ENCODE measurements at regions of chr22 and their contacts with region 1.

Region 1: GRCh38 chr22:30386960-30387827 is at the start of gene RNF215:
- DNase-seq: peak; percentile 87 to 95
- H3K4me3 ChIP-seq: peak within 1 kb of the TSS; percentile 57 to 64 (median 62)
- H3K27ac ChIP-seq: peak within 1 kb of the TSS; percentile 60 to 90 (median 86)
- H3K4me1 ChIP-seq: peaks cover 12 to 21% (median 16%) of the 10 kb centered on the region in 4 donors
- H3K27me3 ChIP-seq: no peaks in the 10 kb centered on the region
- CTCF ChIP-seq: peak in 6 of 7 experiments; percentile 26 to 97 (median 88)
- EP300 ChIP-seq: no peak
- POLR2A ChIP-seq: no peak
- total RNA-seq, gene RNF215: 3.6 to 29.4 (median 15.6) TPM

Region 2: GRCh38 chr22:30289134-30289979 is 97.8 kb before region 1 on chr22 and contains the start of gene CASTOR1:
- intact Hi-C with region 1: loop called (anchors 5 kb)
- DNase-seq: peak; percentile 99
- H3K4me3 ChIP-seq: peak within 1 kb of the TSS; percentile 84 to 97 (median 88)
- H3K27ac ChIP-seq: peak within 1 kb of the TSS; percentile 85 to 97 (median 89)
- H3K4me1 ChIP-seq: peaks cover 36 to 55% (median 48%) of the 10 kb centered on the region in 4 donors
- H3K27me3 ChIP-seq: no peaks in the 10 kb centered on the region
- CTCF ChIP-seq: no peak
- EP300 ChIP-seq: no peak
- POLR2A ChIP-seq: peak in 1 of 4 donors; percentile 17
- total RNA-seq, gene CASTOR1: 1.2 to 57.8 (median 3.7) TPM

Region 3: DNA sequence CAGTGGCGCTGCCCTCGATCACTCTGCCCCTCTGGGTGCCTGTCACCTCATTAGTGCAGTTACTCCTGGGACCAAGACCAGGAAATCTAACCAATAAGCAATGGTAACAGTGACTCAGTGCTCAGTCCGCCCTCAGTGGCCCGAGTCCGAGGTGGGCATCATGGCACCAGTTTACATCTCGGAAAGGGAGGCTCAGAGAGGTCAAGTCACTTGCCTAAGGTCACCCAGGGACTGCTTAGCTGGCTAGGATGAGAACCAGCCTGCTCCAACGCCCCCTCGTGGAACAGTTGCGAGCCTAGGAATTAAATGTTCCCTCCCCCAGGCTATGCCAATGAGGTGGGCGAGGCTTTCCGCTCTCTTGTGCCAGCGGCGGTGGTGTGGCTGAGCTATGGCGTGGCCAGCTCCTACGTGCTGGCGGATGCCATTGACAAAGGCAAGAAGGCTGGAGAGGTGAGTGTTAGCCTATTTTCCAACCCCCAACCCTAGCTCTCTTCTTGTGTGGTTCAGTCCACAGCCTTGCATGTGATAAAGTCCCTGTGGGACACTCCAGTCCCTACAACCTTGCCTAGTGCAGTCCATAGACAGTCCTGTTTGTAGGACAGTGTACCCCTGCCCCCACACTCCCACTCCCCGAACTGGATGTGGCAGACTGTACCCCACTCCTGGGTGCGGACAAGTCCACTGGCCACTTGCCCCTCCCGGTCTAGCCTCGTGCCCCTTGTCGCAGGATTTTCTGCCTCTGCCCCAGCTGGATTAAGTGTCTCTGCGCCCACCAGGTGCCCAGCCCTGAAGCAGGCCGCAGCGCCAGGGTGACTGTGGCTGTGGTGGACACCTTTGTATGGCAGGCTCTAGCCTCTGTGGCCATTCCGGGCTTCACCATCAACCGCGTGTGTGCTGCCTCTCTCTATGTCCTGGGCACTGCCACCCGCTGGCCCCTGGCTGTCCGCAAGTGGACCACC is 39.5 kb after region 1 on chr22:
- intact Hi-C with region 1: loop called (anchors 5 kb)
- DNase-seq: peak; percentile 92 to 94
- H3K4me3 ChIP-seq: peak overlapping the region; percentile 61 to 68 (median 65)
- H3K27ac ChIP-seq: peak overlapping the region; percentile 79 to 98 (median 96)
- H3K4me1 ChIP-seq: peaks cover 27 to 50% (median 49%) of the 10 kb centered on the region in 4 donors
- H3K27me3 ChIP-seq: no peaks in the 10 kb centered on the region
- CTCF ChIP-seq: peak in 5 of 7 experiments; percentile 49 to 84 (median 74)
- EP300 ChIP-seq: no peak
- POLR2A ChIP-seq: no peak

Region 4: GRCh38 chr22:30485362-30485988 is 98.3 kb after region 1 on chr22:
- intact Hi-C with region 1: loop called (anchors 5 kb)
- DNase-seq: peak; percentile 74 to 82
- H3K4me3 ChIP-seq: no peak overlapping the region
- H3K27ac ChIP-seq: no peak overlapping the region
- H3K4me1 ChIP-seq: peaks cover 0 to 20% (median 12%) of the 10 kb centered on the region in 4 donors
- H3K27me3 ChIP-seq: peaks cover 0 to 7% (median 0%) of the 10 kb centered on the region in 3 donors
- CTCF ChIP-seq: peak in 6 of 7 experiments; percentile 16 to 96 (median 88)
- EP300 ChIP-seq: no peak
- POLR2A ChIP-seq: no peak

Region 5: DNA sequence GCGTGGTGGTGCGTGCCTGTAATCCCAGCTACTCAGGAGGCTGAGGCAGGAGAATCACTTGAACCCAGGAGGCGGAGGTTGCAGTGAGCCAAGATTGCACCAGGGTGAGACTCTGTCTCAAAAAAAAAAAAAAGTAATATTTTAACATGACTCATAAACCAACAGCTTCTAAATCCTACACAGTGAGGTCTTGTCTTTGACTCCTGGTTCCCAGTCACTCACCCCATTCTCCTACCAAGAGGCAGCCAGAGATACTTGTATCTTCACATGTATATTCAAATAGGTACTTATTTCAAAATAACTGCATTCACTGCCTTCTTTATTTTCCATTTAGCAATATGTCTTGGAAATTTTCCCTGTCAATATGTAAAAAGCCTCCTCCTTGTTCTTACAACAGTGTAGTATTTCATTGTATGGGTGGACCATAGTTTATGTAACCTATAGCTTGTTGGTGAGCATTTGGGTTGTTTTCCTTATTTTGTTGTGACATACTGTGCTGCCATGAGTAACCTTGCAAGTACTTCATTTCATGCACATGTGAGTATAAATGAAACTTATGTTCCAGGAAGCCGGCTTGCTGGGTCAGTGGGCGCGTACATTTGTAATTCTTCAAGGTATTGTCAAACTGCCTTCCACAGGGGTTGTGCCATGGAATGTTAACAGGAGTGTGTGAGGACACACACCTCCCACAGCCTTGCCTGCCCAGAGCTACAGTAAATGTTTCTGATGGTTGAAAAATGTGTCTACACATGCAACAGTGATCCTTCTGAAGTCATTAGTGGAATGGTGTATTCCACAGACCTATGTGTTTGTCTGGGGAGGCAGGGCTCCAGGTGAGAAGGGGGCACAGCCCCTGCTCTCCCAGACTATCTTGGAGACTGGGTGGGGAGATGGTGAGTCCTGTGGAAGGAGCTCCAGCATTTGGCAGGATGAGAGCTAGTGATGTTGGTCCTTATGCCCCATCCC is 355.4 kb after region 1 on chr22:
- intact Hi-C with region 1: no loop called
- DNase-seq: no peak
- H3K4me3 ChIP-seq: no peak overlapping the region
- H3K27ac ChIP-seq: no peak overlapping the region
- H3K4me1 ChIP-seq: no peaks in the 10 kb centered on the region
- H3K27me3 ChIP-seq: no peaks in the 10 kb centered on the region
- CTCF ChIP-seq: no peak
- EP300 ChIP-seq: no peak
- POLR2A ChIP-seq: no peak

Measured in stomach (tissue), 19 donors.